ENCODE measurements at regions of chr11 and their contacts with region 1.

Region 1: DNA sequence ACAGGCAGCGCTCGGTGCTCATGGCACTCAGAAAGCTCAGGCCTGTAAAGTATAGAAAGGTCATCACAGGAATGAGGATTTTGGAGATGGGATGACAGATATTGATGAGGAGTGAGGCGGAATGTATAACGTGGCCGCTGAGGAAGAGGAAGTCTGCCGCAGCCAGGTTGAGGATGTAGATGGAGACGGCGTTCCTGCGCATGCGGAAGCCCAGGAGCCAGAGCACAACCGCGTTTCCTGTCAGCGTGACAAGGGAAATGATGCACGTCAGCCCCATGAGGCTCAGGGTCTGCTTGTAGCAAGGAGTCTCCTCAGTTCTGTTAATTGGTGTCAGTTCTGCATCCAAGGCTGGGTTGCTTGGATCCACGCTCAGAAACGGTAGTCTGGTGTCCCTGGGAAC is 33.1 kb upstream of the MRGPRX1 start:
- DNase-seq: no peak
- H3K4me3 ChIP-seq: no peak overlapping the region
- H3K27ac ChIP-seq: no peak overlapping the region
- H3K4me1 ChIP-seq: no peaks in the 10 kb centered on the region
- H3K27me3 ChIP-seq: no peaks in the 10 kb centered on the region
- CTCF ChIP-seq: no peak

Region 2: GRCh38 chr11:19032990-19033389 is 60.7 kb after region 1 on chr11:
- intact Hi-C with region 1: loop called (anchors 10 kb)
- DNase-seq: no peak
- H3K4me3 ChIP-seq: no peak overlapping the region
- H3K27ac ChIP-seq: no peak overlapping the region
- H3K4me1 ChIP-seq: no peaks in the 10 kb centered on the region
- H3K27me3 ChIP-seq: no peaks in the 10 kb centered on the region
- CTCF ChIP-seq: no peak

Measured in colonic mucosa (tissue), 4 donors.